ENCODE measurements at regions of chr3 and their contacts with region 1.

Region 1: DNA sequence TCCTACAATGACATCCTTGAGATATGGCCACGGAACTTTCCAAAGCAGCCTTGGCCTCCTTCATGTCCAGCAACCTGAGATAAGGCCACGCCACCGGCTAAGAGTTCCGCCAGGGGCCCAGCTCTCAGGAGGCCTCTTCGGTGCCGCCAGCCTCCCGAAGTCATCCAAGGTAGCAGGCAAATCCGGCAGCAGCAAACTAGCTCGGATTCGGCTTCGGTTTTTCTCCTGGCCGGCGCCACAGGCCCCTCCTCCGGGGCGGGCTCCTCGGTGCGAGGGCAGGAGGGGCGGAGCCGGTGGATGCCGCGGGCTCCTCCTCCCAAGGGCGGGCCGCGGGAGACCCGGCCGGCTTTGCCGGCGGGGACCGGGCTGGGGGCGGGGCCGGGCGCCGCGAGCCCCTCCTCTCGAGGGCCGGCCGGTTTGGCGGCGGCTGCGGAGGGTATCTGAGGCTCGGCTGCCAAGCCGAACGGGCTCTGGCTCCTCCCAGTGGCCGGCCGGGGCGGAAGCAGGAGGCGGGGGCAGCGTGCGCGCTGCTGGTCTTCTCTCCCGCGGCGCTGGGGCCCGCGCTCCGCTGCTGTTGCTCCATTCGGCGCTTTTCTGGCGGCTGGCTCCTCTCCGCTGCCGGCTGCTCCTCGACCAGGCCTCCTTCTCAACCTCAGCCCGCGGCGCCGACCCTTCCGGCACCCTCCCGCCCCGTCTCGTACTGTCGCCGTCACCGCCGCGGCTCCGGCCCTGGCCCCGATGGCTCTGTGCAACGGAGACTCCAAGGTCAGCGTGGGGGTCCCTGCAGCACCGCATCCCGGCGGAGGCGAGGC is at the start of gene GMPS:
- DNase-seq: peak; percentile 98
- CTCF ChIP-seq: peak; percentile 63

Region 2: GRCh38 chr3:155854141-155854940 is 16.0 kb before region 1 on chr3 and contains the start of gene SLC33A1:
- CTCF ChIA-PET with region 1: interaction called, 28 read pairs
- POLR2A ChIA-PET with region 1: interaction called, 4 read pairs
- DNase-seq: peak; percentile 98
- CTCF ChIP-seq: no peak

Region 3: DNA sequence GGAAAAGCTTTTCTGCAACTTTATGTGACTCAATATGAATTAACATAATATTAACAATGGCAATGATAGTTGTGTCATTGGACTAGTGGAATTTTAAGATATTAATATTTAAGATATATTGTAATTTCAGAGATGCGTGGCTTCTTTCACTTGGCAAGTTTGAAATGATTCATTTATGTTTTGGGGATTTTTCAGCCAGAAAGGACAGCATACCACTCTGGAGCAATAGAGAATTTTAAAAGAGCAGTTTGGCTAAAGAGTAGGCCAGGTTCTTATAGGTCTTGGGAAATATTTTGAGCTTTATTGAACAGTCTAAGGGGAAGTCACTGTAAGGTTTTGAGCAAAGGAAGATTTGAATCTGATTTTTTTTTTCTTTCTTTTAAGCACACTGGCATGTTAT is 16.6 kb after region 1 on chr3:
- CTCF ChIA-PET with region 1: interaction called, 23 read pairs
- POLR2A ChIA-PET with region 1: interaction called, 5 read pairs
- DNase-seq: no peak
- CTCF ChIP-seq: no peak

Region 4: DNA sequence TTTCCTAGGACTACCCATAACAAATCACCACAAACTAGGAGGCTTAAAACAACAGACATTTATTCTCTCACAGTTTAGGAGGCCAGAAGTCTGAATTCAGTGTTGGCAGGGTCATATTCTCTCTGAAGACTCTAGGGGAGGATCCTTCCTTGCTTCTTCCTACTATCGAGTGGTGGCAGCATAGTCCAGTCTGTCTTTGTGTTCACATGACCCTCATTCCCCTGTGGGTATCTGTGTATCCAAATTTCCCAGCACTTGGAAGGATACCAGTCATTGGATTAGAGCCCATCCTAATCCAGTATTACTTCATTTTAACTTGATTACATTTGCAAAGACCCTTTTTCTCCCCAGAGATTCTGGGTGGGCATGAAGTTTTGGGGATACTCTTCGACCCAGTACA is 63.9 kb after region 1 on chr3:
- CTCF ChIA-PET with region 1: no interaction called
- POLR2A ChIA-PET with region 1: no interaction called
- DNase-seq: no peak
- CTCF ChIP-seq: no peak

Region 5: GRCh38 chr3:155946178-155946577 is 75.8 kb after region 1 on chr3:
- CTCF ChIA-PET with region 1: no interaction called
- POLR2A ChIA-PET with region 1: no interaction called
- DNase-seq: no peak
- CTCF ChIP-seq: no peak